Activated CD8-positive, alpha-beta T cell treated with anti-CD3 and anti-CD28 coated beads for 36 hours (primary cell): ENCODE measurements at regions of chr20 and their contacts with region 1.

Region 1: GRCh38 chr20:20052074-20052970 is at the starts of genes CFAP61 and CRNKL1:
- DNase-seq: peak; percentile 97
- ATAC-seq: peak; percentile 95
- H3K4me3 Mint-ChIP-seq: peak within 1 kb of the TSS; percentile 94
- H3K27ac Mint-ChIP-seq: peak within 1 kb of the TSS; percentile 95
- H3K4me1 Mint-ChIP-seq: peaks cover 18% of the 10 kb centered on the region
- H3K27me3 Mint-ChIP-seq: peaks cover 2% of the 10 kb centered on the region
- CTCF ChIP-seq: no peak
- total RNA-seq, gene CFAP61: not detected
- total RNA-seq, gene CRNKL1: 21.1 to 23.3 TPM

Region 2: GRCh38 chr20:20017001-20017843 is 35.1 kb before region 1 on chr20 and contains the start of gene NAA20:
- CTCF ChIA-PET with region 1: interaction called, 10 read pairs
- POLR2A ChIA-PET with region 1: interaction called, 15 read pairs
- intact Hi-C with region 1: loop called (anchors 2 kb)
- DNase-seq: peak; percentile 94
- ATAC-seq: peak; percentile 96
- H3K4me3 Mint-ChIP-seq: peak within 1 kb of the TSS; percentile 85
- H3K27ac Mint-ChIP-seq: peak within 1 kb of the TSS; percentile 84
- H3K4me1 Mint-ChIP-seq: peaks cover 51% of the 10 kb centered on the region
- H3K27me3 Mint-ChIP-seq: no peaks in the 10 kb centered on the region
- CTCF ChIP-seq: peak; percentile 44
- total RNA-seq, gene NAA20: 99.8 to 100 TPM

Region 3: GRCh38 chr20:20034486-20034885 is 17.8 kb before region 1 on chr20:
- CTCF ChIA-PET with region 1: interaction called, 3 read pairs
- POLR2A ChIA-PET with region 1: interaction called, 10 read pairs
- intact Hi-C with region 1: no loop called
- DNase-seq: no peak
- ATAC-seq: no peak
- H3K4me3 Mint-ChIP-seq: no peak overlapping the region
- H3K27ac Mint-ChIP-seq: no peak overlapping the region
- H3K4me1 Mint-ChIP-seq: peaks cover 5% of the 10 kb centered on the region
- H3K27me3 Mint-ChIP-seq: no peaks in the 10 kb centered on the region
- CTCF ChIP-seq: no peak